ENCODE measurements at regions of chr14 and their contacts with region 1.

Region 1: GRCh38 chr14:49852301-49853157 is at the start of gene NEMF:
- DNase-seq: peak; percentile 92
- H3K4me3 Mint-ChIP-seq: peak within 1 kb of the TSS; percentile 99
- H3K27ac Mint-ChIP-seq: peak within 1 kb of the TSS; percentile 99
- H3K4me1 Mint-ChIP-seq: peaks cover 15% of the 10 kb centered on the region
- H3K27me3 Mint-ChIP-seq: no peaks in the 10 kb centered on the region
- CTCF ChIP-seq: peak; percentile 88
- total RNA-seq, gene NEMF: 55.0 and 57.7 TPM in 2 replicates

Region 2: GRCh38 chr14:49620182-49621113 is 232.1 kb before region 1 on chr14 and contains the starts of genes MGAT2 and RPL36AL:
- CTCF ChIA-PET with region 1: no interaction called
- POLR2A ChIA-PET with region 1: interaction called, 14 read pairs
- intact Hi-C with region 1: no loop called
- DNase-seq: peak; percentile 98
- H3K4me3 Mint-ChIP-seq: peak within 1 kb of the TSS; percentile 99
- H3K27ac Mint-ChIP-seq: peak within 1 kb of the TSS; percentile 99
- H3K4me1 Mint-ChIP-seq: peaks cover 28% of the 10 kb centered on the region
- H3K27me3 Mint-ChIP-seq: no peaks in the 10 kb centered on the region
- CTCF ChIP-seq: peak; percentile 14
- total RNA-seq, gene MGAT2: 43.8 and 44.3 TPM in 2 replicates
- total RNA-seq, gene RPL36AL: 257 and 299 TPM in 2 replicates

Region 3: GRCh38 chr14:49720744-49721143 is 131.8 kb before region 1 on chr14:
- CTCF ChIA-PET with region 1: no interaction called
- POLR2A ChIA-PET with region 1: no interaction called
- intact Hi-C with region 1: no loop called
- DNase-seq: no peak
- H3K4me3 Mint-ChIP-seq: no peak overlapping the region
- H3K27ac Mint-ChIP-seq: no peak overlapping the region
- H3K4me1 Mint-ChIP-seq: no peaks in the 10 kb centered on the region
- H3K27me3 Mint-ChIP-seq: peaks cover 11% of the 10 kb centered on the region
- CTCF ChIP-seq: no peak

Region 4: DNA sequence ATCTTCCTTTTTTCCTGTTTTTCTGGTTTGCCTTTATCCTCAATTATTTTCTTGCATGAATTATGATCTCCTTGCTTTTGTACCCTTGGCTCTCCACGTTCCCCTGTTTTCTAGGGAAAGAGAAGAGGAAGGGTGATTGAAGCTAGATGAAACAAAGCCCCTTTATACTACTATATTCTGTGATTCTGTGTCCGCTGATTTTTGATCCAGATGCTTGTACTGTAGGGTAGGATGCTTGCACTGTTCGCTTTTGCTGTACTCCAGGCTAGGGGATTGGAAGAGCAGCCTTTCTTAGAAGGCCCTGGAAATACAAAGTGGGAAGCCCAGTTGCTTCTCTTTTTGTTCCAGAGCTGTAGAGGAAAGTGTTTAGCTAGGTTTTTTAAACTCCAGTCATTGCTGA is 119.6 kb before region 1 on chr14:
- CTCF ChIA-PET with region 1: no interaction called
- POLR2A ChIA-PET with region 1: no interaction called
- intact Hi-C with region 1: no loop called
- DNase-seq: no peak
- H3K4me3 Mint-ChIP-seq: no peak overlapping the region
- H3K27ac Mint-ChIP-seq: no peak overlapping the region
- H3K4me1 Mint-ChIP-seq: no peaks in the 10 kb centered on the region
- H3K27me3 Mint-ChIP-seq: no peaks in the 10 kb centered on the region
- CTCF ChIP-seq: no peak

Region 5: GRCh38 chr14:49767562-49768300 is 84.8 kb before region 1 on chr14 and contains the start of gene KLHDC2:
- CTCF ChIA-PET with region 1: interaction called, 5 read pairs
- POLR2A ChIA-PET with region 1: interaction called, 37 read pairs
- intact Hi-C with region 1: no loop called
- DNase-seq: peak; percentile 85
- H3K4me3 Mint-ChIP-seq: peak within 1 kb of the TSS; percentile 86
- H3K27ac Mint-ChIP-seq: peak within 1 kb of the TSS; percentile 98
- H3K4me1 Mint-ChIP-seq: peaks cover 18% of the 10 kb centered on the region
- H3K27me3 Mint-ChIP-seq: no peaks in the 10 kb centered on the region
- CTCF ChIP-seq: peak; percentile 14
- total RNA-seq, gene KLHDC2: 28.3 and 32.4 TPM in 2 replicates

Region 6: DNA sequence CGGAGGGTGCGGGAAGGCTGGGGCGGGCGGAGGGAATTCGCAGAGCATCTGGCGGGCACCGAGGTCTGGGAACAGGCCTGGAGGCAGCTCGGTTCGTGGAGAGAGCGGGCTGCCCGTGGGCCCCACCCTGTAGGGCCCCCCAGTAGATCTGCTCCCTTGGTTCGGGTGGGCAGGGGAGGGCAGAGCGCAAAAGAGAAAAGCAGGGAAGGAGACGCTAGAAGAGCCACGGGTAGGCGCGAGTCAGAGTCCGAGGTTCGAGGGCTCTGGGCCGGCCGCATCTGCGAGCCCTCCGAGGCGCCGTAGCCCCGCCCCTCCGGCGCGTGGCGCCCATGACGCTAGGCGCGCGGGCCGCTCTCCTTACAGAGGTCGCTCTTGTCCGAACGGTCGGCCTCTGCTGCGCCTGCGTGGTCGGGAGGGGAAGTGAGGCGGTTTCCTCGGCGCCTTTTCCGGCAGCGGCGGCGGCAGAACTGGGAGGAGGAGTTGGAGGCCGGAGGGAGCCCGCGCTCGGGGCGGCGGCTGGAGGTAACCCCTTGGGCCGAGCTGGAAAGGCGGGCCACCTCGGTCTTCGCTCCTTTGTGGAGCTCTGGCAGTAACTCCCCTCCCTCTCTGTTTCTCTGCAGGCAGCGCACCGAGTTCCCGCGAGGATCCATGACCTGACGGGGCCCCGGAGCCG is 40.2 kb after region 1 on chr14 and contains the start of gene ARF6:
- CTCF ChIA-PET with region 1: interaction called, 4 read pairs
- POLR2A ChIA-PET with region 1: interaction called, 23 read pairs
- intact Hi-C with region 1: no loop called
- DNase-seq: peak; percentile 97
- H3K4me3 Mint-ChIP-seq: peak within 1 kb of the TSS; percentile 92
- H3K27ac Mint-ChIP-seq: peak within 1 kb of the TSS; percentile 99
- H3K4me1 Mint-ChIP-seq: peaks cover 28% of the 10 kb centered on the region
- H3K27me3 Mint-ChIP-seq: no peaks in the 10 kb centered on the region
- CTCF ChIP-seq: no peak
- total RNA-seq, gene ARF6: 111 and 112 TPM in 2 replicates

Region 7: GRCh38 chr14:50008562-50009350 is 156.2 kb after region 1 on chr14:
- CTCF ChIA-PET with region 1: interaction called, 4 read pairs
- POLR2A ChIA-PET with region 1: interaction called, 13 read pairs
- intact Hi-C with region 1: loop called (anchors 5 kb)
- DNase-seq: peak; percentile 96
- H3K4me3 Mint-ChIP-seq: peak overlapping the region; percentile 69
- H3K27ac Mint-ChIP-seq: peak overlapping the region; percentile 96
- H3K4me1 Mint-ChIP-seq: peaks cover 29% of the 10 kb centered on the region
- H3K27me3 Mint-ChIP-seq: no peaks in the 10 kb centered on the region
- CTCF ChIP-seq: no peak

Region 8: DNA sequence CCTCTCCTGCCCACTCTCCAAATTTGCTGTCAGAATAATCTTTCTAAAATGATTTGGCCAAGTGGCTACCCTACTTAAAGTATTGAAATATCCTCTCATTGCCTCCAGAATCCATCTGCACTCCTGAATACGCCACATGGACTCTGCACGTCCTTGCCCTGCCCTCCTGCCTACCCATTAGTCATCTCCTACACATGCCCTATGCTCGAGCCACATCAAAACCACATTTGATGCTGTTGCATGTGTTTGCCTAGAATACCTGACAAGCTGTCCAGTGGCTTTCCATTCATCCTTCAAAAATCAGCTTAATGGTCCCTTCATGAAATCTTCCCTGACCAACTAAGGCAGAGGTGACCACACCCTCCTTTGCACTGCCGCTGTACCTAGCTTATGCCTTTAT is 246.8 kb after region 1 on chr14:
- CTCF ChIA-PET with region 1: interaction called, 178 read pairs
- POLR2A ChIA-PET with region 1: interaction called, 7 read pairs
- intact Hi-C with region 1: loop called (anchors 2 kb)
- DNase-seq: peak; percentile 47
- H3K4me3 Mint-ChIP-seq: no peak overlapping the region
- H3K27ac Mint-ChIP-seq: peak overlapping the region; percentile 33
- H3K4me1 Mint-ChIP-seq: peaks cover 11% of the 10 kb centered on the region
- H3K27me3 Mint-ChIP-seq: no peaks in the 10 kb centered on the region
- CTCF ChIP-seq: no peak

Region 9: GRCh38 chr14:50116181-50116956 is 263.8 kb after region 1 on chr14 and contains the start of gene VCPKMT:
- CTCF ChIA-PET with region 1: interaction called, 23 read pairs
- POLR2A ChIA-PET with region 1: interaction called, 25 read pairs
- intact Hi-C with region 1: no loop called
- DNase-seq: peak; percentile 90
- H3K4me3 Mint-ChIP-seq: peak within 1 kb of the TSS; percentile 93
- H3K27ac Mint-ChIP-seq: peak within 1 kb of the TSS; percentile 99
- H3K4me1 Mint-ChIP-seq: no peaks in the 10 kb centered on the region
- H3K27me3 Mint-ChIP-seq: no peaks in the 10 kb centered on the region
- CTCF ChIP-seq: no peak
- total RNA-seq, gene VCPKMT: 7.2 and 10.4 TPM in 2 replicates

Measured in MCF 10A (cell line).